Endothelial cell of umbilical vein (primary cell): ENCODE measurements at regions of chr12 and their contacts with region 1.

Region 1: DNA sequence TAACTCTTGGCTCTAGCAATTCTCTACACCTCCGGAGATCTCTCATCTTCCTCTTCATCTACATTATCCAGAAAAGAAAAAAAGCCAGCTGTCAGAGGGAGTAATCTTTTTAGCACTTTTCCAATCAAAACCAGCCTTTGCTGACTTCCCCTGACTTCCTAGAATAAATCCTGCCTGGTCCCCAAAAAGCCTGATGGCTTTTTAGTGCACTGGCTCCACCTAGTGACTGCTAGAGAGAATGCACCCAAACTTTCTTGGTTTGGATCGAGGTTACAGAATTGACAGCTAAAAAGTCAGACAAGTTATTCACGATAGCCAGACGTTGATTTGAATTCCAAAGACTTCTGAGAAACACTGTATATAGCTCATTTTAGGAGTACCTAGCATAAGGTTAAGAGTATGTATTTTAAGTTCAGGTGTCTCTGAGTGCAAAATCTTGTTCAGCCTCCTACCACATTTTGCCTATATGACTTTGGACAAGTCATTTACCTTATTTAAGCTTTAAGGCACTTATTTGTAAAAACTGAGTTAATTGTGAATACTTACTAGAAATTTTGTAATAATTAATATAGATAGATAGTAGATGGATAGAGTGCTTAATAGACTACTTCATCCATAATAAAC is 185.7 kb upstream of the GRIN2B start:
- DNase-seq: peak; percentile 58
- H3K4me3 ChIP-seq: no peak overlapping the region
- H3K27ac ChIP-seq: no peak overlapping the region
- H3K4me1 ChIP-seq: no peaks in the 10 kb centered on the region
- H3K27me3 ChIP-seq: no peaks in the 10 kb centered on the region
- CTCF ChIP-seq: peak; percentile 86 to 89
- POLR2A ChIP-seq: no peak

Region 2: GRCh38 chr12:13255792-13256691 is 911.1 kb before region 1 on chr12:
- CTCF ChIA-PET with region 1: interaction called, 35 read pairs
- POLR2A ChIA-PET with region 1: no interaction called
- dilution Hi-C with region 1: no loop called
- intact Hi-C with region 1: no loop called
- DNase-seq: peak; percentile 96
- H3K4me3 ChIP-seq: peak overlapping the region in 2 of 3 experiments; percentile 27 to 34
- H3K27ac ChIP-seq: peak overlapping the region; percentile 2
- H3K4me1 ChIP-seq: peaks cover 17% of the 10 kb centered on the region
- H3K27me3 ChIP-seq: no peaks in the 10 kb centered on the region
- CTCF ChIP-seq: peak; percentile 98 to 100
- POLR2A ChIP-seq: no peak

Region 3: DNA sequence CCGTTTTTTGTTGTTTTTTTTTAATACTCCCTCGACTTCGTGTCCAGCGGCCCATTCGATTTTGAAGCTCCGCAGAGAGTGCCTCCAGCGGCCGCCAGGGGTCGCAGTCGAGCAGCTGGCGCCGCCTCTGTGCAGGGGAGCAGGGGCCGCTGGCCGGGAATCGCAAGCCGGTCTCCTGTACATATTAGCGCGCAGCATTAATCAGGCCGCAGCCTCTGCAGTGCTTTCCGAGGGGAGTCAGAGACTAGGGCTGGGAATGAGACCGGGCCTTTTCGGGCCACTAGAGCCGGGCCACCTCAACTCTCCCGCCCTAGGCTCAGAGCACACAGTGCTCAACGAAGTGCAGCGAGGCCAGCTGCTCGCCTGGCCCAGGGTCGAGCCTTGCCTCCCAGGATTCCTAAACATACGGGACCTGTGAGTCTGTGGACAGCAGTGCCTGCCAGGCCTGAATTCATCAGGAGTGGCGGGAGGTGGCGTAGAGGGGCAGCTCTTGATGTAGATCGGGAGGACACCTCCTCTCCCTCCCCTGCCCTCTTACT is 888.8 kb before region 1 on chr12:
- CTCF ChIA-PET with region 1: interaction called, 51 read pairs
- POLR2A ChIA-PET with region 1: no interaction called
- dilution Hi-C with region 1: no loop called
- intact Hi-C with region 1: loop called (anchors 5 kb)
- DNase-seq: peak; percentile 72
- H3K4me3 ChIP-seq: no peak overlapping the region
- H3K27ac ChIP-seq: no peak overlapping the region
- H3K4me1 ChIP-seq: no peaks in the 10 kb centered on the region
- H3K27me3 ChIP-seq: peaks cover 35 to 48% of the 10 kb centered on the region in 2 experiments
- CTCF ChIP-seq: peak; percentile 99
- POLR2A ChIP-seq: no peak

Region 4: DNA sequence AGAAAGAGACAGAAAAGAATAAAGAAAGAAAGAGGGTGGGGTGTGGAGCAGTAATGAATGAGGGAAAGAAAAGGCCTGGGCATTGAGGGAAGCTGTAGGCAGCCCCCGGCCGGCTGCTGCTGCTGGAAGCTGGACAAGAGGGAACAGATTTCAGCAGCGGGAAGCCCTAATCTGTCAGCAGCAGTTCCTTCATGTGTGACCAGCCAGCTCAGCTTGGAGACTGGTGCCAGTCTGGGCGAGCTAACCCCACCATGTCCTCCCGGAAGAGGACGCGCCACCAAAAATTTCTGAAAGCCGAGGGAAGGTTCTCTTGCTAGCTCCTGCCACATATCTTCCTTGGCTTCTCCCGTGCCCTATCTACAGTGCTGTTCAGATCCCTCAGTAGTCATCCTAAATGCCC is 422.6 kb before region 1 on chr12:
- CTCF ChIA-PET with region 1: interaction called, 3 read pairs
- POLR2A ChIA-PET with region 1: no interaction called
- dilution Hi-C with region 1: no loop called
- intact Hi-C with region 1: loop called (anchors 1 kb)
- DNase-seq: no peak
- H3K4me3 ChIP-seq: no peak overlapping the region
- H3K27ac ChIP-seq: no peak overlapping the region
- H3K4me1 ChIP-seq: no peaks in the 10 kb centered on the region
- H3K27me3 ChIP-seq: no peaks in the 10 kb centered on the region
- CTCF ChIP-seq: no peak
- POLR2A ChIP-seq: no peak

Region 5: GRCh38 chr12:13864081-13864673 is 302.9 kb before region 1 on chr12:
- CTCF ChIA-PET with region 1: interaction called, 31 read pairs
- POLR2A ChIA-PET with region 1: no interaction called
- dilution Hi-C with region 1: no loop called
- intact Hi-C with region 1: loop called (anchors 1 kb)
- DNase-seq: peak; percentile 57
- H3K4me3 ChIP-seq: no peak overlapping the region
- H3K27ac ChIP-seq: no peak overlapping the region
- H3K4me1 ChIP-seq: no peaks in the 10 kb centered on the region
- H3K27me3 ChIP-seq: no peaks in the 10 kb centered on the region
- CTCF ChIP-seq: peak; percentile 86 to 95
- POLR2A ChIP-seq: no peak

Region 6: DNA sequence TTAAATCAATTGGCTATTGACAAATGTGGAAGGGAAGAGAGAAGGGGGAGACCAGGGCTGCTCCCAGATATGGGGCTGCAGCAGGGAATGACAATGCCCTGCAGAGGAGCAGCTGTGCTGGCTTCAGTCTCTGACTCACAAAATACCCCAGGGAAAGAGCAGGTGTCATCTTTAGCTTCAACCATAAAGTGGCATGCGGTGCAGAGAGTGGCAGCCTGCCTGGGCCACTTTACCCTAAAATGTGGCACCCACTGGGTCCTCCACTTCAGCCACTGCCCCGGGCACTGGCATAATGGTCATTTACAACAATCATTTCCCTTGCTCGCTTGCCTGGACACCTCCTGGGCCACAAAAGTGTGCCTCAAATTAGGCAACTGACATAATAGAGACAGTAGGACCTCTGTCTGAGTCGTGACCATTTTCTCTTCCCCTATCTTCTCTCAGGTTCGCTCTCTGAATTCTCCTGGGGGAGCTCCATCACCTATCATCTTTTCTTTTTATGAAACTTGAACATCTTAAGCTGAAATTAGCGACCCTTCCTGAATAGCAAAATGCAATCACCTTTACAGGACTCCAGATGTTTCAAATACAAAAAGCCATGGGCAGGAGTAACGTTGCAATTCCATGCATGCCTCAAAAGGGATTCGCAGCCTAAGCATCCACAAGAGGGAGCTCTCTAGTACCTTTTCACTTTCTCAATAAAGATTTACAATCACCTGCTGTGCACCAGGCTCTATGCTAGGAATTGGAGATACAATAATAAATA is 18.5 kb after region 1 on chr12:
- CTCF ChIA-PET with region 1: interaction called, 28 read pairs
- POLR2A ChIA-PET with region 1: no interaction called
- dilution Hi-C with region 1: no loop called
- intact Hi-C with region 1: no loop called
- DNase-seq: peak; percentile 35
- H3K4me3 ChIP-seq: no peak overlapping the region
- H3K27ac ChIP-seq: no peak overlapping the region
- H3K4me1 ChIP-seq: no peaks in the 10 kb centered on the region
- H3K27me3 ChIP-seq: no peaks in the 10 kb centered on the region
- CTCF ChIP-seq: peak; percentile 50 to 72
- POLR2A ChIP-seq: no peak